GM12878 (cell line): ENCODE measurements at regions of chr9 and their contacts with region 1.

Region 1: DNA sequence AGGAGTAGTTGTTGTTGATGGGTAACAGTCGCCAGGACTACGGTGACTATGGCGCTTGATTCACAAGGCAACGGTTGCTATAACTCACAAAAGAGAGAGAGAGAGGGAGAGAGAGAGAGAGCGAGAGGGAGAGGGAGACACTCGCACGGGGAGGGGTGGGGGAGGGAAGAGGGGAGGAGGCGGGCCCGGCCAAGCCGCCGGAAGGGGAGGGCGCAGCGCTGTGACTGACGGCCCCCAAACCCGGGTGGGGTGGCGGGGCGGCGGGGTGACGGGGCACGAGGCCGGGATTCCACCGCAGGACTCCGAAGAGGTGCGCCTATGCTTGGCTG is at the start of gene RFX3:
- DNase-seq: peak; percentile 78
- ATAC-seq: peak; percentile 64
- H3K4me3 ChIP-seq: peak within 1 kb of the TSS; percentile 95
- H3K27ac ChIP-seq: peak within 1 kb of the TSS; percentile 96
- H3K4me1 ChIP-seq: no peaks in the 10 kb centered on the region; the same call in 1 of the 2 replicates
- H3K27me3 ChIP-seq: no peaks in the 10 kb centered on the region
- CTCF ChIP-seq: no peak
- EP300 ChIP-seq: peak; percentile 33 to 93; a peak in 3 of 4 replicates
- POLR2A ChIP-seq: no peak
- RAD21 ChIP-seq: 0 out of 2 replicates have a peak, but pooled peaks have one; percentile 1
- polyA plus RNA-seq, gene RFX3: 1.2 to 1.8 TPM

Region 2: DNA sequence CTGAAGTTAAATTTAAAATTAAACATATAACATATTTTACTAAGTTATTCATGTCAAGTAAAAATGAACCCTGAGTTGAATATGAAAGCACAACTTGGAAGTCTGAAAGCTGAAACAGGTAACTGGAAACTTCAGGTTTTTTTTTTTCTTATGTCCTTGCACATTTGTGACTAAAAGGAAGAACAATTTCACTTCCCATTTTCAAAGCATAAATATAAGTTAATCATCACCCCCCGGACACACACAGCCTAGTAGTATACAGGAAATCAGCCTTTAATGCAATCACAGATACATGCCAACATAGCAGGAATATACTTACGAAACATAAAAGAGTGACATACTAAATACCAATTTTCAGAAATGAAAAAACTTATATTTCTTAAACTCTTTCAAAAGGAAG is 225.9 kb before region 1 on chr9:
- CTCF ChIA-PET with region 1: no interaction called
- POLR2A ChIA-PET with region 1: no interaction called
- RAD21 ChIA-PET with region 1: no interaction called
- SMC1A ChIA-PET with region 1: no interaction called
- in situ Hi-C with region 1: no loop called
- intact Hi-C with region 1: loop called (anchors 5 kb)
- DNase-seq: peak; percentile 71
- ATAC-seq: peak; percentile 99
- H3K4me3 ChIP-seq: no peak overlapping the region
- H3K27ac ChIP-seq: no peak overlapping the region; the same call in 1 of the 2 replicates
- H3K4me1 ChIP-seq: peaks cover 8% of the 10 kb centered on the region; the same call in 1 of the 2 replicates
- H3K27me3 ChIP-seq: no peaks in the 10 kb centered on the region
- CTCF ChIP-seq: no peak
- EP300 ChIP-seq: peak; percentile 40 to 72; a peak in 3 of 4 replicates
- POLR2A ChIP-seq: no peak
- RAD21 ChIP-seq: no peak

Region 3: GRCh38 chr9:3473405-3473804 is 52.4 kb before region 1 on chr9:
- CTCF ChIA-PET with region 1: interaction called, 37 read pairs
- POLR2A ChIA-PET with region 1: interaction called, 81 read pairs
- RAD21 ChIA-PET with region 1: interaction called, 180 read pairs
- SMC1A ChIA-PET with region 1: interaction called, 131 read pairs
- in situ Hi-C with region 1: loop called (anchors 5 kb)
- intact Hi-C with region 1: loop called (anchors 5 kb)
- DNase-seq: no peak
- ATAC-seq: peak; percentile 64
- H3K4me3 ChIP-seq: no peak overlapping the region
- H3K27ac ChIP-seq: peak overlapping the region; percentile 40
- H3K4me1 ChIP-seq: peaks cover 37% of the 10 kb centered on the region
- H3K27me3 ChIP-seq: no peaks in the 10 kb centered on the region
- CTCF ChIP-seq: peak in 1 of 3 experiments; percentile 32; a peak in 1 of 6 replicates
- EP300 ChIP-seq: no peak
- POLR2A ChIP-seq: no peak
- RAD21 ChIP-seq: peak; percentile 33; the same call in 1 of the 2 replicates

Region 4: DNA sequence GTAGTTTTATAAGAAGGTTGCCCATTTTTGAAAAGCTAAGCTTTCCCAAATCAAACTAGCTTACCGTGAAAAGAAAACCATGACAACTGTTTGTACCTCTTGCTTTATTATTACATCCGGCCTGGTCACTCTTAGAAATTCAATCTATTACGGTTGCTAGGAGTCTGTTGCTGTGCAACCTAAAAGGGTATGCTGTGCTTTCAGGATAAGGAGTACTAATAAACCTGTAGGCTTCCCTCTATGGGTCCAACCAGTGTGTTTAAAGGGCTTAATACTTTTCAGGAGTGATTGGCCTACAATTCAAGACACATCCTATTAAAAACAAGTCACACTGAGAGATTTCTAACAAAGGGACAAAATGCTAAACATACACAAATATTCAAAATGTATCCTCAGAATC is 27.1 kb before region 1 on chr9:
- CTCF ChIA-PET with region 1: interaction called, 5 read pairs
- POLR2A ChIA-PET with region 1: interaction called, 5 read pairs
- RAD21 ChIA-PET with region 1: interaction called, 7 read pairs
- SMC1A ChIA-PET with region 1: interaction called, 19 read pairs
- in situ Hi-C with region 1: no loop called
- intact Hi-C with region 1: no loop called
- DNase-seq: no peak
- ATAC-seq: peak; percentile 53
- H3K4me3 ChIP-seq: no peak overlapping the region
- H3K27ac ChIP-seq: no peak overlapping the region
- H3K4me1 ChIP-seq: peaks cover 2% of the 10 kb centered on the region; the same call in 1 of the 2 replicates
- H3K27me3 ChIP-seq: no peaks in the 10 kb centered on the region
- CTCF ChIP-seq: no peak
- EP300 ChIP-seq: no peak
- POLR2A ChIP-seq: no peak
- RAD21 ChIP-seq: no peak

Region 5: GRCh38 chr9:3647652-3648051 is 121.9 kb after region 1 on chr9:
- CTCF ChIA-PET with region 1: interaction called, 4 read pairs
- POLR2A ChIA-PET with region 1: interaction called, 3 read pairs
- RAD21 ChIA-PET with region 1: interaction called, 4 read pairs
- SMC1A ChIA-PET with region 1: interaction called, 4 read pairs
- in situ Hi-C with region 1: no loop called
- intact Hi-C with region 1: loop called (anchors 2 kb)
- DNase-seq: no peak
- ATAC-seq: no peak
- H3K4me3 ChIP-seq: no peak overlapping the region
- H3K27ac ChIP-seq: no peak overlapping the region
- H3K4me1 ChIP-seq: no peaks in the 10 kb centered on the region
- H3K27me3 ChIP-seq: no peaks in the 10 kb centered on the region
- CTCF ChIP-seq: peak in 1 of 3 experiments; percentile 36; a peak in 2 of 6 replicates
- EP300 ChIP-seq: no peak
- POLR2A ChIP-seq: no peak
- RAD21 ChIP-seq: peak; percentile 54

Region 6: GRCh38 chr9:3708751-3709150 is 183.0 kb after region 1 on chr9:
- CTCF ChIA-PET with region 1: no interaction called
- POLR2A ChIA-PET with region 1: no interaction called
- RAD21 ChIA-PET with region 1: no interaction called
- SMC1A ChIA-PET with region 1: no interaction called
- in situ Hi-C with region 1: no loop called
- intact Hi-C with region 1: no loop called
- DNase-seq: peak; percentile 9
- ATAC-seq: peak; percentile 70
- H3K4me3 ChIP-seq: no peak overlapping the region
- H3K27ac ChIP-seq: no peak overlapping the region
- H3K4me1 ChIP-seq: no peaks in the 10 kb centered on the region
- H3K27me3 ChIP-seq: 0 out of 4 replicates have a peak, but pooled peaks cover 0 to 1% of the 10 kb centered on the region in 2 experiments
- CTCF ChIP-seq: no peak
- EP300 ChIP-seq: no peak
- POLR2A ChIP-seq: no peak
- RAD21 ChIP-seq: no peak